ENCODE measurements at regions of chr7 and their contacts with region 1.

Region 1: GRCh38 chr7:36280840-36281812 is 108.5 kb upstream of the ANLN start:
- DNase-seq: peak in 3 of 14 experiments; percentile 36 to 66 (median 58)
- ATAC-seq: peak; percentile 35
- H3K4me3 ChIP-seq: no peak overlapping the region
- H3K4me3 Mint-ChIP-seq: no peak overlapping the region
- H3K27ac ChIP-seq: no peak overlapping the region
- H3K27ac Mint-ChIP-seq: no peak overlapping the region
- H3K4me1 ChIP-seq: peaks cover 60% of the 10 kb centered on the region
- H3K4me1 Mint-ChIP-seq: peaks cover 58% of the 10 kb centered on the region
- H3K27me3 ChIP-seq: no peaks in the 10 kb centered on the region
- H3K27me3 Mint-ChIP-seq: no peaks in the 10 kb centered on the region
- CTCF ChIP-seq: no peak

Region 2: GRCh38 chr7:35831208-35831607 is 449.9 kb before region 1 on chr7:
- CTCF ChIA-PET with region 1: no interaction called
- POLR2A ChIA-PET with region 1: no interaction called
- intact Hi-C with region 1: no loop called
- DNase-seq: no peak
- ATAC-seq: no peak
- H3K4me3 ChIP-seq: no peak overlapping the region
- H3K4me3 Mint-ChIP-seq: no peak overlapping the region
- H3K27ac ChIP-seq: no peak overlapping the region
- H3K27ac Mint-ChIP-seq: no peak overlapping the region
- H3K4me1 ChIP-seq: peaks cover 18% of the 10 kb centered on the region
- H3K4me1 Mint-ChIP-seq: peaks cover 87% of the 10 kb centered on the region
- H3K27me3 ChIP-seq: no peaks in the 10 kb centered on the region
- H3K27me3 Mint-ChIP-seq: no peaks in the 10 kb centered on the region
- CTCF ChIP-seq: no peak

Region 3: DNA sequence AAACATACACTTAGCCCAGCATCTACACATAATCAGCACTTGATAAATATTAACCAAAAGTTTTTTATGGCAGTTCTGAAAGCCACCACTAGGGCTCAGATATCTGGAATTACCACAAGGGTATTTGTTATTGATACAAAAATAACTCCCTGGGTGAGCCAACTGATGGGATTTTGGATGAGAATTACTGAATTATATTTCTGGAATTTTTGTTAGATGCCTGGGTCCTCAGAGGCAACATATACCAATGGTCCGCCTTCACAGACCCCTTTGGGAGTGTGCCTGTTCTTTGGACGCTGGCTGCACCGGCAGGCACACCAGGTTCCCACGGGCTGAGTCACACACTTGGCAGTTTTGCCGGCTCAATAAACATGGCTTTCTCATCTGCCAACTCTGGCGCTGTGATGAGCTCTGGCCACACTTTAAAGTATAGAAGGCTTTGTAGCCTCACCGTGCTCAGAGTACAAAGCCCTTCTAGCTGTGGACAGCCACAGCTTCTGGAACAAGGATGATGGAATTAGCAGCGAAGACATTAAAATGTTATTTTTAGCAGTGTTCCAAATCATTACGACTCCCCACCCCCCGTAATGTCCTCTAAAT is 152.6 kb before region 1 on chr7:
- CTCF ChIA-PET with region 1: no interaction called
- POLR2A ChIA-PET with region 1: no interaction called
- intact Hi-C with region 1: loop called in 1 of 2 experiments (anchors 2 kb)
- DNase-seq: peak in 2 of 14 experiments; percentile 24 to 27
- ATAC-seq: no peak
- H3K4me3 ChIP-seq: no peak overlapping the region
- H3K4me3 Mint-ChIP-seq: no peak overlapping the region
- H3K27ac ChIP-seq: no peak overlapping the region
- H3K27ac Mint-ChIP-seq: no peak overlapping the region
- H3K4me1 ChIP-seq: peaks cover 17% of the 10 kb centered on the region
- H3K4me1 Mint-ChIP-seq: peaks cover 6% of the 10 kb centered on the region
- H3K27me3 ChIP-seq: no peaks in the 10 kb centered on the region
- H3K27me3 Mint-ChIP-seq: no peaks in the 10 kb centered on the region
- CTCF ChIP-seq: peak; percentile 65

Region 4: GRCh38 chr7:36214608-36215456 is 66.3 kb before region 1 on chr7:
- CTCF ChIA-PET with region 1: no interaction called
- POLR2A ChIA-PET with region 1: interaction called, 3 read pairs
- intact Hi-C with region 1: loop called in 1 of 2 experiments (anchors 5 kb)
- DNase-seq: no peak
- ATAC-seq: no peak
- H3K4me3 ChIP-seq: no peak overlapping the region
- H3K4me3 Mint-ChIP-seq: no peak overlapping the region
- H3K27ac ChIP-seq: no peak overlapping the region
- H3K27ac Mint-ChIP-seq: no peak overlapping the region
- H3K4me1 ChIP-seq: peaks cover 10% of the 10 kb centered on the region
- H3K4me1 Mint-ChIP-seq: peaks cover 12% of the 10 kb centered on the region
- H3K27me3 ChIP-seq: no peaks in the 10 kb centered on the region
- H3K27me3 Mint-ChIP-seq: no peaks in the 10 kb centered on the region
- CTCF ChIP-seq: no peak

Region 5: GRCh38 chr7:36301914-36302771 is 21.0 kb after region 1 on chr7:
- CTCF ChIA-PET with region 1: no interaction called
- POLR2A ChIA-PET with region 1: no interaction called
- intact Hi-C with region 1: no loop called
- DNase-seq: no peak
- ATAC-seq: no peak
- H3K4me3 ChIP-seq: no peak overlapping the region
- H3K4me3 Mint-ChIP-seq: no peak overlapping the region
- H3K27ac ChIP-seq: no peak overlapping the region
- H3K27ac Mint-ChIP-seq: no peak overlapping the region
- H3K4me1 ChIP-seq: no peaks in the 10 kb centered on the region
- H3K4me1 Mint-ChIP-seq: no peaks in the 10 kb centered on the region
- H3K27me3 ChIP-seq: no peaks in the 10 kb centered on the region
- H3K27me3 Mint-ChIP-seq: no peaks in the 10 kb centered on the region
- CTCF ChIP-seq: no peak

Region 6: DNA sequence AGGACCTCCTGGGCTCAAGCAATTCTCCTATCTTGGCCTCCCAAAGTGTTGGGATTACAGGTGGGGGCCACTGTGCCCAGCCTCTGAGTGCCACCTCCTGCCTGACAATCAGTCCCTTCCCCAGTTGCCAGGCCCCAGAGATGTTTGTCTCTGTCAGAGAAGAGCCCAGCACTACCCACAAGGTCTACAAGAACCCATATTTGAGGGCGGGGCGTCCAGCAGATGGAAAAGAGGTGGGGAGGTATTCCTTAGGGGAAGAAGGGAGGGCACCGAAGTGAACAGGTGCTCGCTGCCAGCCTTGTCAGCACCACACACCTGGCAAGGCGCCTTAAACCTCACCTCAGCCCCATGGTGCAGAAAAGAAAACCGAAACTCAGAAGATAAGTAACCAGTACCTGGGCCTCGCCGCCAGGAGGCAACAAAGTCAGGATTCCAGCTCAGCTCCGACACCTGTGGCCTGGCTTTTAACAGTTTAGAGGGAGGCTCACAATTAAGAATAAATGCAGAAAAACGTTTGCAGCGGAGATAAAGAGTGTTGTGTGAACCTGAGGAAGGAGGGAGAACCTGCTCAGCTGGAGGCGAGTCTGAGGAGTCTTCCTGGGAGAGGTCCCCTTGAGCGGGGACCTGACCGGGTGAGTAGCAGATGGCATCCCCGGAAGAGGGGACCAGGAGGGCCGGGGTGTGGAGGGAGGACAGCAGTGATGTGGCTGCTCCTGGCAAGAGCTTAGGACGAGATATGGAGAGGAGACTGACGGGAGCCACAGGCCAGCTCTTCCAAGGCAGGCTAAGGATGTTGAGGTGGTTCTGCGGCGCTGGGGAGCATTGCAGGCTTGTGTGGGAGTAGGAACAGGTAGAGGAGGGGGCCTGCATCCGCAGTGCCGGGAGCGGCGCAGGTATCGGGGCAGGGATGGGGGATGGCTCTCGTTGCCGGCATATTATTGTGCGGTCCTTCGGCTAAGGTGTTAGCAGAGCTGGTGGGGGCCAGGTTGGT is 31.5 kb after region 1 on chr7:
- CTCF ChIA-PET with region 1: no interaction called
- POLR2A ChIA-PET with region 1: no interaction called
- intact Hi-C with region 1: no loop called
- DNase-seq: peak in 10 of 14 experiments; percentile 8 to 66 (median 32)
- ATAC-seq: peak; percentile 77
- H3K4me3 ChIP-seq: no peak overlapping the region
- H3K4me3 Mint-ChIP-seq: no peak overlapping the region
- H3K27ac ChIP-seq: no peak overlapping the region
- H3K27ac Mint-ChIP-seq: no peak overlapping the region
- H3K4me1 ChIP-seq: no peaks in the 10 kb centered on the region
- H3K4me1 Mint-ChIP-seq: peaks cover 7% of the 10 kb centered on the region
- H3K27me3 ChIP-seq: no peaks in the 10 kb centered on the region
- H3K27me3 Mint-ChIP-seq: no peaks in the 10 kb centered on the region
- CTCF ChIP-seq: no peak